ENCODE measurements at regions of chr1 and their contacts with region 1.

Region 1: DNA sequence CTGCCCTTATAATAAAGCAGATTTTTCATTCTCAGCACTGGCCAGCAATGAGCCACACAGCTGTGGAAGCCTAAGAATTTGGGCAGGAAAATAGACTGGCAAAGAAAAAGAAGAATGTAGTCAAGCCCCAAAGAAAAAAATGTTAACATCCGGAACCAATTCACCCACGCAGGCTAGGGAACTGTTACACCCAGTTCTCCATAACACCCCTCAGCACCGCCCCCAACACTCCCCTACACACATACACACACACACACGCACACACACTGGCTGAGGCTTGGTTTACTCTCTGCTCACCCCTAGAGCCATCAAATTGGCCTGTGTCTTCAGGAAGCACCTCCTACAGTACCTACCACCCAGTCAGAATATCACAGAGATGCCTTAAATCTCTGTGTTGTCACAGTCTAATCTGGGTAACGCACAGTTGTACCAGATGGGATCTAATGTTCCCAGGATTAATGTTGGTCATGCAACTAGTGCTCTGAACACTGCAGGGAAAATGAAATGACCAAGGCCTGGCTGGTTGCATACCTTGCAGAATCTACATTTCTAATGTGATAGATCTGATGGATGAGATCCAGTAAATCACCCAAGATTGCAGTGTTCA is 14.5 kb downstream of the TBX15 start:
- DNase-seq: no peak
- H3K4me3 ChIP-seq: no peak overlapping the region
- H3K27ac ChIP-seq: no peak overlapping the region
- H3K4me1 ChIP-seq: peaks cover 22% of the 10 kb centered on the region
- CTCF ChIP-seq: no peak

Region 2: GRCh38 chr1:117883620-117884019 is 1090.0 kb before region 1 on chr1:
- CTCF ChIA-PET with region 1: no interaction called
- POLR2A ChIA-PET with region 1: no interaction called
- intact Hi-C with region 1: no loop called
- DNase-seq: no peak
- H3K4me3 ChIP-seq: no peak overlapping the region
- H3K27ac ChIP-seq: no peak overlapping the region
- H3K4me1 ChIP-seq: no peaks in the 10 kb centered on the region
- CTCF ChIP-seq: no peak

Region 3: GRCh38 chr1:118773656-118774055 is 200.0 kb before region 1 on chr1:
- CTCF ChIA-PET with region 1: no interaction called
- POLR2A ChIA-PET with region 1: no interaction called
- intact Hi-C with region 1: no loop called
- DNase-seq: no peak
- H3K4me3 ChIP-seq: no peak overlapping the region
- H3K27ac ChIP-seq: no peak overlapping the region
- H3K4me1 ChIP-seq: no peaks in the 10 kb centered on the region
- CTCF ChIP-seq: no peak

Region 4: DNA sequence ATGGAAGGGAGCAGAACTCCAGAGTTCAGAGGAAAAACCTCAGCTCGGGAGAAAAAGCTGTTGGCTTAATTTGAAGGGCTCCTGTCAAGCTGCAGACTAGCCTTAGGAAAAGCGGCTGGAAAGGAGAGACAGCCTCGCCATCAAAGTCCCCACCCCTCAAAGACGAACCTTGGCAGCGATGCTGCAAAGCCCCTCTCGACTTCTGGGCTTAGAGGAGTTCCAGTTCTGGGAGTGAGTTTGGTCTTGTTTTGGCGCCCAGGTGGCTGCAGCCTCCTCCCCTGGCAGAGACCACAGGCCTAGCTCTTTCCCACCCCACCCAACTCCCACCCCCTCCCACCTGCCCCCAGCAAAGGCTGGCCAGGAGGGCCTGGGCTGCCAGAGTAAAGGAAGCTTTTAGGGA is 23.6 kb after region 1 on chr1:
- CTCF ChIA-PET with region 1: interaction called, 10 read pairs
- POLR2A ChIA-PET with region 1: no interaction called
- intact Hi-C with region 1: no loop called
- DNase-seq: no peak
- H3K4me3 ChIP-seq: no peak overlapping the region
- H3K27ac ChIP-seq: no peak overlapping the region
- H3K4me1 ChIP-seq: no peaks in the 10 kb centered on the region
- CTCF ChIP-seq: no peak

Measured in OCI-LY7 (cell line).